GM23248 (cell line): ENCODE measurements at regions of chrX and their contacts with region 1.

Region 1: DNA sequence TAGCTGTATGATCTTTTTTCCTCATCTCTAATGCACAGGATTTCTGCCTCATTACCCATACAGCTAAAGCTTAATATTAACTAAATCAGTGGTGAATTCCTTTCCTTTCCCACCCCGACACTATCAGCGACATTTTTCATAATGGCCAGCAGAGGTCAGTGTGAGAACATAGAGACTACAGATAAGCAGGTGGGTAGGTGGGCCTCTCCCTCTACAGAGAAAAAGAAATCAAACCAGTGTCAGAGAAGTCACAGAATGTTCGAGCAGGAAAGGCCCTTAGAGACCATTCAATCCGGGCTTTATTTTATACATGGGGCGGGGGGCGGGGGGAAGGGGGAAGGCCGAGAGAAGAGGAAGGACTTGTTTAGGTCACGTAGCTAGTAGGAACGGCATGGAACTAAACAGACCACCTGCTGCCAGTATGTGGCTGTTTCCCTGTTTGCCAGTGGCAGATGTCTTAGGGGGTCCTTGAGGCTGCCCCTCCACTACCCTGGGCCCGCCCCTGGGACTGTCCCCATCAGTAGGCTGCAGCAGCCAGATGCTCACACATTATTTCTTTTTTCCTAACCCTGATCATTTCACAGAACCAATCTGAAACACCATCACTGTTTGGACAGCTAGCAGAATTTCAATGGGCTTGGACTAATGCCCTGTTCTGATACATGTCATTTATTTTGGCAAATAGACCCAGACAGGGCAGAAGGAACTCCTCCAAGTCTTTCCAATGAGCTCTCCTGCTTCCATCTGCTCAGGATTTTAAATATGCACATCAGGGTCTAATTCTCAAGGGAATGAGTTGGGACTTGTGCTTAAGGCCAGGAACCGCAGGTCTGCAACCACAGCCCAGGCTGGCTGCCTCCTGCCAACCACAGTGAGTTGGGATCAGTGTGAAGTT is 133.4 kb downstream of the ATG4A start:
- DNase-seq: peak; percentile 40
- H3K4me3 ChIP-seq: no peak overlapping the region
- H3K27ac ChIP-seq: no peak overlapping the region
- H3K4me1 ChIP-seq: no peaks in the 10 kb centered on the region
- H3K27me3 ChIP-seq: no peaks in the 10 kb centered on the region

Region 2: DNA sequence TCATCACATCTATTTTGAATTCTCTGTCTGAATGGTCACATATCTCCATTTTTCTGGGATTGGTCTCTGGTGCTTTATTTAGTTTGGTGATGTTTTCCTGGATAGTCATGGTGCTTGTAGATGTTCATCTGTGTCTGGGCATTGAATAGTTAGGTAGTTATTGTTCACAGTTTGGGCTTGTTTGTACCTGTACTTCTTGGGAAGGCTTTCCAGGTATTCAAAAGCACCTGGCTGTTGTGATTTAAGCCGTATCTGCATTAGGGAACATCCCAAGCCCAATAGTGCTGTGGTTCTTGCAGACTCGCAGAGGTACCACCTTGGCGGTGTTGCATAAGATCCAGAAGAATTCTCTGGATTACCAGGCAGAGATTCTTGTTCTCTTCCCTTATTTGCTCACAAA is 259.3 kb after region 1 on chrX:
- in situ Hi-C with region 1: no loop called
- DNase-seq: no peak
- H3K4me3 ChIP-seq: no peak overlapping the region
- H3K27ac ChIP-seq: no peak overlapping the region
- H3K4me1 ChIP-seq: no peaks in the 10 kb centered on the region
- H3K27me3 ChIP-seq: no peaks in the 10 kb centered on the region

Region 3: DNA sequence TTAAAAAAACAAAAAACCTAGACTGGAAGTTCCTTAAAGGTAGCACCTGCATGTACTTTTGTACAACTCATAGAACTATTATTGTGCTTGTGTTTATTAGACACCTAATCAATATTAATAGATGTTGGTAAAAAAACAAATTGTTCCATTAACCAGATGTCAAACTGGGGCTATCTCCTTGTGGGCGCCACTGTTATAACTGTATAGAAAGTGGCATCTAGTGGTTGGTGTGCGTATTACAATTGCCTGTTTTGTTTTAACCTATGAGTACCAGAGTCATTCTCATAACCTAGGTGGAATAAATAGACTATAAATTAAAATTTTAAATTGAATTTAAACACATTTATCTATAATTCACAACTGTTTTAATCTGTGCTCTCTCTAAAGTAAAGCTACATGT is 312.0 kb after region 1 on chrX:
- in situ Hi-C with region 1: loop called (anchors 10 kb)
- DNase-seq: peak; percentile 54
- H3K4me3 ChIP-seq: no peak overlapping the region
- H3K27ac ChIP-seq: no peak overlapping the region
- H3K4me1 ChIP-seq: no peaks in the 10 kb centered on the region
- H3K27me3 ChIP-seq: no peaks in the 10 kb centered on the region